ENCODE measurements at regions of chr1 and their contacts with region 1.

Region 1: GRCh38 chr1:196309386-196309785 is 298.9 kb downstream of the KCNT2 start:
- DNase-seq: peak; percentile 7
- H3K4me3 ChIP-seq: no peak overlapping the region
- H3K27ac ChIP-seq: no peak overlapping the region
- H3K27me3 ChIP-seq: no peaks in the 10 kb centered on the region
- CTCF ChIP-seq: peak; percentile 42

Region 2: DNA sequence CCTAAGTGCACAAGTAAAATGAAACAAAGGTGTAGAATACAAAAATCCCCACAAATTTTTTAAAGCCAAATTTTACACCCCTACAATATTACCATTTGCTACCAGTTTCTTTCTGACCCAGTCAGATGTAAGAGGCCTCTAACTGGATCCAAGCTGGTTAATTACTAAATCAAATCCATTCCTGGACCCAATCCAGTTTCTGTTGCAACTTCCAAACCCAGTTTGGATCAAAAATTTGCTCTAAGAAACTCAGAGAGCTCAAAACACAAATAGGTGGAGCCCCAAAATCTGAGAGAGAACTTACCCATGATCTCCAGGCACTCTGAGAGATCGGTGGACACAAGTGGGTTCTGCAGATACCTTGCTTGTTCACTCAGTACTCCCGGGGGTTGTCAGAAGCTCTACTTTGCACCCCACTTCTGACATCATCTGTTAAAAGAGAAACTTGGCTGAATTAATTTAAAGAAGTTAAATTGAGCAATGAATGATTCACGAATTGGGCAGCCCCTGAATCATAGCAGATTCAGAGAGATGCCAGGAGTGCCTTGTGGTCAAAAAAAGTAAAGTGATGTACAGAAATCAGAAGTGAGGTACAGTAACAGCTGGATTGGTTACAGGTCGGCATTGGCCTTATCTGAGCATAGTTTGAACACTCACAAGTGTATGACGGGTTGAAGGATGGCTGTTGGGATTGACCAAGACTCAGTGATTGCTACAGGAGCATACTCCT is 149.2 kb before region 1 on chr1:
- CTCF ChIA-PET with region 1: interaction called, 19 read pairs
- POLR2A ChIA-PET with region 1: no interaction called
- DNase-seq: no peak
- H3K4me3 ChIP-seq: no peak overlapping the region
- H3K27ac ChIP-seq: no peak overlapping the region
- H3K27me3 ChIP-seq: no peaks in the 10 kb centered on the region
- CTCF ChIP-seq: no peak

Region 3: DNA sequence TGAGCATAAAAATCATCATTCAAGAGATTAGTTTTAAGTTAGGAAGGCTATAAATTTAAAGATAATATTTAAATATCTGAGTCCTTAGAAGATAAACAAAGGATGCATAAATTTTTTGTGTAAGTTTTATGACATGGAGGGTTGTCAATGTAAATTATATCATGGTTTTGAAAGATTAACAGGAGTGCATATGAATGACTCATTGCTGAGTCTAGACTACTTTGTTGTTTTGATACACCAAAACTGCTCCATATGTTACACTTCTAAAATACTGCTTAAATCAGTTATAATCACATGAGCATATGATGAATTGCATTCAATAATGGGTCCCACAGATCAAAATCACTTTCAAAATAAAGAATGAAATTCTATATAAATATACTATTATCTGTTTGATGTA is 13.6 kb before region 1 on chr1:
- CTCF ChIA-PET with region 1: interaction called, 10 read pairs
- POLR2A ChIA-PET with region 1: no interaction called
- DNase-seq: no peak
- H3K4me3 ChIP-seq: no peak overlapping the region
- H3K27ac ChIP-seq: no peak overlapping the region
- H3K27me3 ChIP-seq: no peaks in the 10 kb centered on the region
- CTCF ChIP-seq: no peak

Region 4: GRCh38 chr1:196425513-196425912 is 116.1 kb after region 1 on chr1:
- CTCF ChIA-PET with region 1: no interaction called
- POLR2A ChIA-PET with region 1: no interaction called
- DNase-seq: no peak
- H3K4me3 ChIP-seq: no peak overlapping the region
- H3K27ac ChIP-seq: no peak overlapping the region
- H3K27me3 ChIP-seq: no peaks in the 10 kb centered on the region
- CTCF ChIP-seq: peak; percentile 23; the same call in 1 of the 2 replicates

Measured in AG04450 (cell line).